Lower leg skin (tissue), 4 donors: ENCODE measurements at regions of chr7 and their contacts with region 1.

Region 1: DNA sequence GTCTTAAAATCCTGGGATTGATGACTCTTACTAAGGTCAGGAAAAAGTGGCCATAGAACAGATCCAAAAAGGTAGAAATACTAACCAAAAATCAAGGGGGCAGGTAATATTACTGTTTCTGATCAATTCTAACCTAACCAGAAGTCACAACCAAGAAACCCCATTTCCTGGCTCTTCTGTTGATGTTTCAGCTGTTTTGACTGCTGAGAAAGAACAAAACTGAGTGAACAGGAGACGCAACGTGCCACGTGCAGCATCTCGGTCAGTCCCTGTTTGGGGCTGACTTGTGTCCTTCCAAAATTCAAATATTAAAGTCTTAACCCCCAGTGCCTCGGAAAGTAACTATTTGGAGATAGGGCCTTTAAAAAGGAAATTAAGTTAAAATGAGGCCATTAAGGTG is 56.8 kb downstream of the JAZF1 start:
- DNase-seq: no peak
- H3K4me3 ChIP-seq: no peak overlapping the region
- CTCF ChIP-seq: no peak
- POLR2A ChIP-seq: no peak

Region 2: DNA sequence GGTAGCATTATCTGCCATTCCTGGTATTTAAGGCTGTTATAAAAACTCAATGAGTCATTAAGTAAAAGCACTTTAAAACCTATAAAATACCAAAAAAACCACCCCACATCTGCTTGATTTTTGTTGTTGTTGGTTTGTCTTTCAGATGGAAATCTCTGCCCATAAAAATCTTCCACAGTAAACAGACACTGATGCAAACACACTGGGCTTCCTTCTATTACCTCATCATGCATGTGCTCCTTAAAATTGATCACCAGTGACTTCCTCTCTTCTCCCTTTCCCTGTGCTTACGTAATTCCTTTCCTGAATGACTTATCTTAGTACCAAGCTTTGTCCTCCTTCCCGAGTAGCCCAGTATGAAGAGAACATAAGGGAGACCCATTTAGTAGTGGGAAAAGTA is 714.0 kb before region 1 on chr7:
- intact Hi-C with region 1: no loop called
- DNase-seq: no peak
- H3K4me3 ChIP-seq: no peak overlapping the region
- CTCF ChIP-seq: no peak
- POLR2A ChIP-seq: no peak

Region 3: GRCh38 chr7:28155019-28155660 is 31.4 kb after region 1 on chr7:
- intact Hi-C with region 1: no loop called
- DNase-seq: no peak
- H3K4me3 ChIP-seq: no peak overlapping the region
- CTCF ChIP-seq: no peak
- POLR2A ChIP-seq: no peak

Region 4: GRCh38 chr7:28230261-28230660 is 106.5 kb after region 1 on chr7:
- intact Hi-C with region 1: loop called (anchors 5 kb)
- DNase-seq: no peak
- H3K4me3 ChIP-seq: no peak overlapping the region
- CTCF ChIP-seq: no peak
- POLR2A ChIP-seq: no peak

Region 5: DNA sequence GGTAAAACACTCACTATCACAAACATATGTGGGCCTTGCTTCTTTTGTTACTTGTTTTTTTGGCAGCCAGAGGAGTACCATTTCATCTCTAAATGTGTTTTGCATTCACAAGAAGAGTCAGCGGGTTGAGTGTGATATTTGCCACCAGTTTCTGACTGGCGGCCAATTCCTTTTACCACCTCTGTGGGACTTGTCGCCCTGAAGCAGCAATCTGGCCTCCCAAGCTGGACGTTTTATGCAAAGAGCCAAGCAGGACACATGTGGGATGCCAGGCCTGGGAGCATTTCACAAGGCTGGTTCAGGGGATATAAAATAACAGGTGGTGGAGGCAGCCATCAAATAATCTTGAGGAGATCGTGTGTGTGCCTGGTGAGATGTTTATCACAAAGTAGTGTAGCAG is 896.1 kb after region 1 on chr7:
- intact Hi-C with region 1: loop called (anchors 5 kb)
- DNase-seq: no peak
- H3K4me3 ChIP-seq: no peak overlapping the region
- CTCF ChIP-seq: no peak
- POLR2A ChIP-seq: no peak